ENCODE measurements at regions of chr10 and their contacts with region 1.

Region 1: DNA sequence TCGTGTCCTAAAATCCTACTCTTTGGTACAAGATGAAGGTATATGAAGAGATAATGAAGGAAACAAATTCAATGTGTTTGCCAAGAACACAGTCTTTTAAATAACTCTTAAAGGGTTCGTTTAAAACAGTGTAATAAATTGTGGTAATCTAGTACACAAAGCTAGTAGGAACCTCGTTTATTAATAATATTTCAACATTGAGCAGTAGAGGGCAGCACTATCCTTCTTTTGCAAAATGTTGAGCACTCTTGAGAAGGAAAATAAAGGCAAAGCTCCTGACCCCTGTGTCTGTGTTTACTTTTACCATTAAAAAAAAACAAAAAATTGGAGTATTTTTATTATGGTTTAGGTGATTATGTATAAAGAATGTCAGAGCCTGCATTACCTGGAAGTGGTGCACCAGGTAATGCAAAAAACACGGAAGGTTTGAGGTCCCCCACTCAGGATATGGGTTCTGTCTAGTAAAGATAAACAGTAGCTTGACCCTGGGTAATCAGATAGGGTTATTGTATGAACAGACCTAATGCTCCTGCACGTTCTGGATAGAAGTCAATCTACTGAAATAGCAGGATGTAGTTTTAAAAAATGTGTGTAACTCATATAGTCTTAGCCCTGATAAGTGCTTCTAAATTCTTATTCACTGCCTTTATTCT is 5.7 kb upstream of the GOT1 start:
- DNase-seq: no peak
- ATAC-seq: peak in 4 of 8 donors; percentile 19 to 40 (median 34)
- H3K4me3 ChIP-seq: no peak overlapping the region
- H3K27ac ChIP-seq: peak overlapping the region in 1 of 10 donors; percentile 11
- H3K4me1 ChIP-seq: peaks cover 0 to 59% (median 25%) of the 10 kb centered on the region in 9 donors
- H3K27me3 ChIP-seq: no peaks in the 10 kb centered on the region
- CTCF ChIP-seq: peak; percentile 39 to 72 (median 61)

Region 2: GRCh38 chr10:99395750-99396445 is 40.2 kb before region 1 on chr10:
- intact Hi-C with region 1: loop called in 7 of 10 experiments (anchors 2 to 5 kb)
- DNase-seq: no peak
- ATAC-seq: peak in 3 of 8 donors; percentile 47 to 50 (median 48)
- H3K4me3 ChIP-seq: no peak overlapping the region
- H3K27ac ChIP-seq: peak overlapping the region in 1 of 10 donors; percentile 15
- H3K4me1 ChIP-seq: peaks cover 0 to 53% (median 21%) of the 10 kb centered on the region in 9 donors
- H3K27me3 ChIP-seq: no peaks in the 10 kb centered on the region
- CTCF ChIP-seq: no peak